Calu3 (cell line): ENCODE measurements at regions of chrX and their contacts with region 1.

Region 1: DNA sequence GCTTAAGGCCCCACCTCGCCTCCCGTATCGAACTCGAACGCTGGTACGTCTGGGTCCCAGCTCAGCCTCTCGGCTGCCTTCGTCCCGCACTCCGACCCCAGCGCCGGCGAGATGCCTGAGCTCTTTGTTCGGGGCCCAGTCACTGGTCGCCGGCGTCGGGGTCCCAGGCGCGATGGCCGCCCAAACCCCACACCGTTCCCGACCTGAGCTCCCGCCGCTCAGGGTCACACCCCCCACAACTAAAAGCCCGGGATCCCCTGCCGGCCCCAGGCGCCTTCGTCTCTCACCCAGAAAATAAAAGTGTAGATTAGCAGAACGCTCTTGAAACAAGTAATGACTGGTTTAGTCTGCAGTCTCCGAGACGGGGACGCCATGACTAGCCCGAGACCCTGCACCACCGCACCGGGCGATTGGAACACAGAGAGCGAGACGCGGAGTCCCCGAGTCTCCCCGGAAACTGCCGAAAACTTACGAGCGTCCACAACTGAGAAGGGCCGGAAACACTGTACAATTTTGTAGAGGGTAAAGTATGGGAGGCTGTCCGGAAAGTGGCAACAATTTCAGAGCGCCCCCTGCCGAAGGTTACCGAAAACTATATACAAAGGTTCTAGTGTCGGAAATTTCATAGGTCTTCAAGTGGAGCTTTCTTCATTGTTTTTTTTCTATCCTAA is at the start of gene TSPAN6:
- DNase-seq: peak; percentile 90
- H3K4me3 Mint-ChIP-seq: peak within 1 kb of the TSS; percentile 74
- H3K27ac Mint-ChIP-seq: peak within 1 kb of the TSS; percentile 64
- H3K4me1 Mint-ChIP-seq: peaks cover 4% of the 10 kb centered on the region
- H3K27me3 Mint-ChIP-seq: no peaks in the 10 kb centered on the region
- CTCF ChIP-seq: peak; percentile 44
- total RNA-seq, gene TSPAN6: 69.1 and 70.6 TPM in 2 replicates

Region 2: GRCh38 chrX:100615005-100615404 is 21.5 kb before region 1 on chrX:
- CTCF ChIA-PET with region 1: interaction called, 31 read pairs
- intact Hi-C with region 1: loop called (anchors 1 kb)
- DNase-seq: peak; percentile 46
- H3K4me3 Mint-ChIP-seq: no peak overlapping the region
- H3K27ac Mint-ChIP-seq: no peak overlapping the region
- H3K4me1 Mint-ChIP-seq: peaks cover 7% of the 10 kb centered on the region
- H3K27me3 Mint-ChIP-seq: no peaks in the 10 kb centered on the region
- CTCF ChIP-seq: peak; percentile 25

Region 3: GRCh38 chrX:100625985-100626491 is 10.4 kb before region 1 on chrX:
- CTCF ChIA-PET with region 1: no interaction called
- intact Hi-C with region 1: no loop called
- DNase-seq: no peak
- H3K4me3 Mint-ChIP-seq: no peak overlapping the region
- H3K27ac Mint-ChIP-seq: no peak overlapping the region
- H3K4me1 Mint-ChIP-seq: no peaks in the 10 kb centered on the region
- H3K27me3 Mint-ChIP-seq: no peaks in the 10 kb centered on the region
- CTCF ChIP-seq: no peak

Region 4: GRCh38 chrX:100649550-100650356 is 13.3 kb after region 1 on chrX:
- CTCF ChIA-PET with region 1: interaction called, 12 read pairs
- intact Hi-C with region 1: no loop called
- DNase-seq: peak; percentile 75
- H3K4me3 Mint-ChIP-seq: no peak overlapping the region
- H3K27ac Mint-ChIP-seq: peak overlapping the region; percentile 80
- H3K4me1 Mint-ChIP-seq: peaks cover 68% of the 10 kb centered on the region
- H3K27me3 Mint-ChIP-seq: no peaks in the 10 kb centered on the region
- CTCF ChIP-seq: no peak